Activated B cell treated with CpG ODN at 0.5 μM for 24 hours (primary cell): ENCODE measurements at regions of chr2 and their contacts with region 1.

Region 1: DNA sequence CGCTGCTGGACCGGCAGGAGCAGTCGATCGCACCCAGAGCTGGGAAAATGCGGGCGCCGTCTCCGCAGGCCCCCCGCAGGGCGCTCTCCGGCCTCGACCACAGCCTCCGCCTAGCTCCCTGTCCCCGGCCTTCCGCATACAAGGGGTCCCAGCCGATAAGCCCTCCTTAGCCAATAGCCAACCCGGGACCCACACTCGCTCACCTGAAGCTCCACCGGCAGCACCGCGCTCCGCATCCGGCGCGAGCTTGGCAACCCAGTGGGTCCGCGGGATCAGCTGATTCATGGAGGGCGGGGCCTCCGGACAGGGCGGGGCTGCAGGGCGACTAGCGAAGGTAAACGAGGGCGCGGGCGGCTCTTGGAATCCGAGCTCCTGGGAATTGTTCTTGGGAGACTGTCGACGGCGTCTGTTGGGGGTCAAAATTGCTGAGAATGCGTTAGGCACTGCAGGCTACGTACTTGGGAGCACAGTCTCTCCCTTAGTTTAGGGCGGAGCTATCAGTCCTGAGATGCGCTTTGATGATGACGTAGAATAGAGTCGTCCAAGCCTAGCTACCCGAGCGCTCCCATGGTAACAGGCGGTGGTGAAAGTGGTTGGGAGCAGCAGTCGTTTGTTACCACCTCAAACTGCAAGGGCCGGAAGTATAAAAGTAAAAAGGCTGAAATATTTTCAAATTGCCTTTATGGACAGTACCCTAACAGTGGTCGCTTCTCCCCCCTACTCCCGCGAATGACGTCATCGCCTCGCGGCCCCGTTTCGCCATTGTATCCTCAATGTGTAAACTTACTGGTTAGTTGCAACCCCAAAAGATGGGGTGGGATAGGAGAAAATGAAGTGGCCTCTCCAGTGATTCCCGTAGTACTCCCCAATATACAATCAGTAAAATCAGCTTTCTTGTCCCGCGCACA is at the start of gene ALS2:
- DNase-seq: peak; percentile 95
- ATAC-seq: peak; percentile 90
- H3K4me3 Mint-ChIP-seq: peak within 1 kb of the TSS; percentile 96
- H3K27ac Mint-ChIP-seq: peak within 1 kb of the TSS; percentile 95
- H3K4me1 Mint-ChIP-seq: peaks cover 17% of the 10 kb centered on the region
- H3K27me3 Mint-ChIP-seq: peaks cover 8% of the 10 kb centered on the region
- CTCF ChIP-seq: no peak
- total RNA-seq, gene ALS2: 11.6 and 14.2 TPM in 2 replicates

Region 2: GRCh38 chr2:199911052-199911876 is 1869.7 kb before region 1 on chr2 and contains the start of gene C2orf69:
- CTCF ChIA-PET with region 1: no interaction called
- POLR2A ChIA-PET with region 1: no interaction called
- intact Hi-C with region 1: loop called (anchors 5 kb)
- DNase-seq: peak; percentile 86
- ATAC-seq: peak; percentile 83
- H3K4me3 Mint-ChIP-seq: peak within 1 kb of the TSS; percentile 94
- H3K27ac Mint-ChIP-seq: peak within 1 kb of the TSS; percentile 94
- H3K4me1 Mint-ChIP-seq: peaks cover 35% of the 10 kb centered on the region
- H3K27me3 Mint-ChIP-seq: no peaks in the 10 kb centered on the region
- CTCF ChIP-seq: no peak
- total RNA-seq, gene C2orf69: 12.1 and 12.6 TPM in 2 replicates

Region 3: GRCh38 chr2:200864176-200864976 is 916.6 kb before region 1 on chr2 and contains the start of gene CLK1:
- CTCF ChIA-PET with region 1: no interaction called
- POLR2A ChIA-PET with region 1: interaction called, 5 read pairs
- intact Hi-C with region 1: loop called (anchors 10 kb)
- DNase-seq: peak; percentile 90
- ATAC-seq: peak; percentile 82
- H3K4me3 Mint-ChIP-seq: peak within 1 kb of the TSS; percentile 100
- H3K27ac Mint-ChIP-seq: peak within 1 kb of the TSS; percentile 100
- H3K4me1 Mint-ChIP-seq: peaks cover 41% of the 10 kb centered on the region
- H3K27me3 Mint-ChIP-seq: no peaks in the 10 kb centered on the region
- CTCF ChIP-seq: no peak
- total RNA-seq, gene CLK1: 173 and 203 TPM in 2 replicates

Region 4: GRCh38 chr2:200888704-200889625 is 892.0 kb before region 1 on chr2 and contains the starts of genes NIF3L1 and PPIL3:
- CTCF ChIA-PET with region 1: no interaction called
- POLR2A ChIA-PET with region 1: interaction called, 3 read pairs
- intact Hi-C with region 1: loop called (anchors 2 kb)
- DNase-seq: peak; percentile 90
- ATAC-seq: peak; percentile 80
- H3K4me3 Mint-ChIP-seq: peak within 1 kb of the TSS; percentile 99
- H3K27ac Mint-ChIP-seq: peak within 1 kb of the TSS; percentile 100
- H3K4me1 Mint-ChIP-seq: peaks cover 40% of the 10 kb centered on the region
- H3K27me3 Mint-ChIP-seq: no peaks in the 10 kb centered on the region
- CTCF ChIP-seq: no peak
- total RNA-seq, gene NIF3L1: 32.2 and 32.3 TPM in 2 replicates
- total RNA-seq, gene PPIL3: 43.5 and 52.5 TPM in 2 replicates

Region 5: GRCh38 chr2:202033321-202034248 is 252.7 kb after region 1 on chr2 and contains the start of gene FZD7:
- CTCF ChIA-PET with region 1: no interaction called
- POLR2A ChIA-PET with region 1: no interaction called
- intact Hi-C with region 1: loop called (anchors 2 kb)
- DNase-seq: peak; percentile 79
- ATAC-seq: peak; percentile 87
- H3K4me3 Mint-ChIP-seq: peak within 1 kb of the TSS; percentile 86
- H3K27ac Mint-ChIP-seq: peak within 1 kb of the TSS; percentile 14
- H3K4me1 Mint-ChIP-seq: peaks cover 12% of the 10 kb centered on the region
- H3K27me3 Mint-ChIP-seq: peaks cover 17% of the 10 kb centered on the region
- CTCF ChIP-seq: no peak
- total RNA-seq, gene FZD7: 0.33 and 0.37 TPM in 2 replicates

Region 6: DNA sequence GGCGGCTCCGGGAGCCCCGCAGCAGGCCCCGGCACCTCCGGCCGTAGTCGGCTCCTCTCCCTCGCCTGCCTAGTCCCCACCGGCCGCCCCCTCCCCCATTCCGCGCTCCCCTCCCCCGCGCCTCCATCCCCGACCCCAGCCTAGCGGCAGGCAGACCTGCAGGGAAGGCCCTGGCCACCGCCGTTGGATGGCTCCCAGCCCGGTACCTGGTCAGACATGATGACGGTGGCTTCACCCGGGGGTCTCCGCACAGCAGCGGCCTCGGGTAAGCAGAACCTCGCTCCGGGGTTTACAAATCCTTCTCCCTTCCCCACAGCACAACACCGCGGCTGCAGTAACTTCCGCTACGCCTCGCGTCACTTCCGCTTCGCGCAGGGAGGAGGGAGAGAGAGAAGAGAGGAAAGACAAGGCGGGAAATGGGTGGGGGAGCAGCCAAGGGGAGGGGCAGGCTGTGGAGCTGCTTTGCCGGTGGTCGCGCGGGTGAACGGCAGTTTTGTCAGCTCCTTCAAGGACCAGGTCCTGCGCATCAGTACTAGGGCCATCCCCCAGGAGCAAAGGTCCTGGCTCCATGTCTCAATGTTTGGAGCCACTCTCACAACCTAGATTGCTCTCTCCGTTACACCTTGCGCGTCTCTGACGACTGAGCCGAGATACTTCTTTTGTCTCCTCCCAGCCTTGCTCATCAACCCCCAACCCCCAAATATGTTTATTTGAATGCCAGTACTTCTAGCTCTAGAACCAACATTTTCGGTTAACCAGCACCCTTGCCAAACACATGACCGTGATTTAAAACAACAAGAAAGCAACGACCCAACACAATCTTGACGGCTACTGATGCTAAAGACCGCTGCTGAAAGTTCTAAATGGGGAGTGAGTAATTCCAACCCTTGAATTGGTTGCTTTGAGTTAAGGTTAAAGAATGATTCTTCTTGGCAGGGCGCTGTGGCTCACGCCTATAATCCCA is 457.6 kb after region 1 on chr2 and contains the start of gene SUMO1:
- CTCF ChIA-PET with region 1: no interaction called
- POLR2A ChIA-PET with region 1: no interaction called
- intact Hi-C with region 1: loop called (anchors 1 kb)
- DNase-seq: peak; percentile 86
- ATAC-seq: peak; percentile 94
- H3K4me3 Mint-ChIP-seq: peak within 1 kb of the TSS; percentile 100
- H3K27ac Mint-ChIP-seq: peak within 1 kb of the TSS; percentile 93
- H3K4me1 Mint-ChIP-seq: peaks cover 36% of the 10 kb centered on the region
- H3K27me3 Mint-ChIP-seq: no peaks in the 10 kb centered on the region
- CTCF ChIP-seq: no peak
- total RNA-seq, gene SUMO1: 78.8 and 83.9 TPM in 2 replicates

Region 7: GRCh38 chr2:203014456-203015199 is 1233.7 kb after region 1 on chr2 and contains the start of gene NBEAL1:
- CTCF ChIA-PET with region 1: no interaction called
- POLR2A ChIA-PET with region 1: no interaction called
- intact Hi-C with region 1: loop called (anchors 1 kb)
- DNase-seq: peak; percentile 100
- ATAC-seq: peak; percentile 93
- H3K4me3 Mint-ChIP-seq: peak within 1 kb of the TSS; percentile 87
- H3K27ac Mint-ChIP-seq: peak within 1 kb of the TSS; percentile 84
- H3K4me1 Mint-ChIP-seq: peaks cover 26% of the 10 kb centered on the region
- H3K27me3 Mint-ChIP-seq: no peaks in the 10 kb centered on the region
- CTCF ChIP-seq: no peak
- total RNA-seq, gene NBEAL1: 8.9 and 9.3 TPM in 2 replicates